ENCODE measurements at regions of chr21 and their contacts with region 1.

Region 1: GRCh38 chr21:31305888-31306287 is 38.2 kb downstream of the TIAM1 start:
- DNase-seq: no peak
- ATAC-seq: no peak
- H3K4me3 ChIP-seq: no peak overlapping the region
- H3K4me3 Mint-ChIP-seq: no peak overlapping the region
- H3K27ac ChIP-seq: no peak overlapping the region
- H3K27ac Mint-ChIP-seq: no peak overlapping the region
- H3K4me1 ChIP-seq: no peaks in the 10 kb centered on the region
- H3K4me1 Mint-ChIP-seq: no peaks in the 10 kb centered on the region
- H3K27me3 ChIP-seq: no peaks in the 10 kb centered on the region
- H3K27me3 Mint-ChIP-seq: no peaks in the 10 kb centered on the region
- CTCF ChIP-seq: no peak

Region 2: GRCh38 chr21:31273278-31273677 is 32.6 kb before region 1 on chr21:
- CTCF ChIA-PET with region 1: no interaction called
- POLR2A ChIA-PET with region 1: no interaction called
- intact Hi-C with region 1: loop called in 1 of 2 experiments (anchors 5 kb)
- DNase-seq: no peak
- ATAC-seq: no peak
- H3K4me3 ChIP-seq: no peak overlapping the region
- H3K4me3 Mint-ChIP-seq: no peak overlapping the region
- H3K27ac ChIP-seq: no peak overlapping the region
- H3K27ac Mint-ChIP-seq: no peak overlapping the region
- H3K4me1 ChIP-seq: peaks cover 3% of the 10 kb centered on the region
- H3K4me1 Mint-ChIP-seq: peaks cover 2% of the 10 kb centered on the region
- H3K27me3 ChIP-seq: no peaks in the 10 kb centered on the region
- H3K27me3 Mint-ChIP-seq: no peaks in the 10 kb centered on the region
- CTCF ChIP-seq: no peak

Region 3: GRCh38 chr21:31354604-31355443 is 48.9 kb after region 1 on chr21:
- CTCF ChIA-PET with region 1: no interaction called
- POLR2A ChIA-PET with region 1: no interaction called
- intact Hi-C with region 1: no loop called
- DNase-seq: peak; percentile 37 to 92 (median 72)
- ATAC-seq: peak; percentile 88
- H3K4me3 ChIP-seq: no peak overlapping the region
- H3K4me3 Mint-ChIP-seq: peak overlapping the region; percentile 21
- H3K27ac ChIP-seq: peak overlapping the region in 1 of 2 donors; percentile 54
- H3K27ac Mint-ChIP-seq: peak overlapping the region; percentile 72
- H3K4me1 ChIP-seq: peaks cover 37% of the 10 kb centered on the region
- H3K4me1 Mint-ChIP-seq: peaks cover 42% of the 10 kb centered on the region
- H3K27me3 ChIP-seq: no peaks in the 10 kb centered on the region
- H3K27me3 Mint-ChIP-seq: no peaks in the 10 kb centered on the region
- CTCF ChIP-seq: no peak